ENCODE measurements at regions of chr14 and their contacts with region 1.

Region 1: DNA sequence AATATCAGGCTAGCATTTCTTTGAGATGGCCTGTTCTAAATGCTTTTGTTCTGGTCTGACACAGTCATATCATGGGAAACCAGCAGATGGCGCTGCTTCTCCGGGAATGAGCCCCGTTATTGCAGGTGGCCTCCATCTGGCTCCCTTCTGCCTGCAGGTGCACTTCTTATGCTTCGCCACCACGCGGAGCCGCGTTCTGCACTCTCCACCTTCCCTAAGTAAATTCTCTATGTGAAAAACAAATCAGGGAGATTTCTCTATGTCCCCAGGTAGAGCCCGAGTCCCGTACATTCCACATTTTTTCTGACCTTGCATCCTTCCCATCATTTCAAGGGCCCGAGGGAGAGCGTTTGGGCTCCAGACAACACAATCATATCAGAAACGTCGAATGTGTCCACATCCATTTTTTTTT is 26.2 kb downstream of the GLRX5 start:
- DNase-seq: peak; percentile 94
- H3K4me3 ChIP-seq: no peak overlapping the region
- H3K27ac ChIP-seq: no peak overlapping the region
- H3K4me1 ChIP-seq: peaks cover 0 to 10% (median 4%) of the 10 kb centered on the region in 4 donors
- H3K27me3 ChIP-seq: peaks cover 0 to 3% (median 0%) of the 10 kb centered on the region in 4 donors
- CTCF ChIP-seq: peak; percentile 86 to 93 (median 92)
- EP300 ChIP-seq: no peak
- POLR2A ChIP-seq: no peak

Region 2: DNA sequence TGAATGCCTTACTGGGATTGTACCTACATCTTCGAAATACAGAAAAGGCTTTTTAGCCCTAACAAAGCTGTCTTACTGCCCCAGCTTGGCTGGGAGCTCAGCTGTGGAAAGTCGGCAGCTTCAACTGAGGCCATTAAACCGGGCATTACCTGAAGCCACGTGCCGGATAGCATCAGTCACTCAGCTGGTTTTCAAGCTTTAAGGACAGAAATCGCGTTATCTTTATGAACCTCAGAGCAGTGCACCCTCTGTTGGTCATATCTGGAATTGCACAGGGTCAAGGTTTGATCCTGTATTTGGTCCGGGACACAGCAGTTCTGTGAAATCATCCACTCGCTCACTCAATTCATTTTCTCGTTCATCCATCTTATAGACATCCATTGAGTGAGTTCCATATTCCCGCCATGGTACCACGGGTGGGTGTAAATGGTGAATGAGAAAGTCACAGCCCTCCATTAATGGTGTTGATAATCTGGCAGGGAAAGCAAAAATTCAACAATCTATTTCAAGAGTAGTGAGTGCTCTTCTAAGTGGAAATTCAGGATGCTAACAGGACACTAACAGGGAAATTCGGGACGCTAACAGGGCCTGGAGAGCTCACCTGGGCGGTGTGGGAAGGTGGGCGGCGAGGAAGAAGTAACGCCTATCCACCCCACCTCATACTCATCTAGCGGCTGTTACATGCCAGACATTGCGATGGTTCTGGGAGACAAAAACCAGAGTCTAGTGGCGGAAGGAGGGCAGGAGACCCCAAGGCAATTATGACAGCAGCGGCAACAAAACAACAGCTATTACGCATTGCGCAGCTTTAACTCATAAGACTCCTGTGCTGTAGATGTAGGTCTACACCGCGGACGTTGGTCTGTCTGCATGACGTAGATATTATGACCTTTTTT is 213.5 kb after region 1 on chr14:
- intact Hi-C with region 1: loop called (anchors 2 kb)
- DNase-seq: no peak
- H3K4me3 ChIP-seq: no peak overlapping the region
- H3K27ac ChIP-seq: no peak overlapping the region
- H3K4me1 ChIP-seq: no peaks in the 10 kb centered on the region
- H3K27me3 ChIP-seq: peaks cover 0 to 25% (median 0%) of the 10 kb centered on the region in 4 donors
- CTCF ChIP-seq: peak; percentile 67 to 91 (median 69)
- EP300 ChIP-seq: no peak
- POLR2A ChIP-seq: no peak

Measured in esophagus muscularis mucosa (tissue), 4 donors.